Panc1 (cell line): ENCODE measurements at regions of chr12 and their contacts with region 1.

Region 1: DNA sequence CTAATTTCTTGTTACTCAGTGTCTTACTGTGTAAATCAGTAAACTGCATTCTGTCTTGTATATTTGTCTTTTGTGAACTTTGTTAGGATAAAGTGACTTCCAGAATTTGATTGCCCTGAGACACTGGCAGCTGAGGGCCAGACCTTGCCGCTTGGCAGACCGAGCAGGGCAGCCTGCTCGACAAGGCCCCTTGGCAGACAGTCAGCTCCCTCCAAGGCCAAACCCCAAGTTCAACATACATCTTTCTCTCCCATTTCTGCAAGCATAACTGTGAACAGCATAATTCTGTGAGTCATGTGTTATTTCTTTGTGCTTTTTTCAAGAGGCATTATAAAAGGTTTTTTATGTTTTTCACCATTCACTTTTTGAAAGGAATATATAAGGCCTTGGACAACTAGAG is 39.2 kb upstream of the BMAL2 start:
- DNase-seq: no peak
- ATAC-seq: no peak
- H3K4me3 ChIP-seq: no peak overlapping the region
- H3K27ac ChIP-seq: no peak overlapping the region
- H3K4me1 ChIP-seq: no peaks in the 10 kb centered on the region
- H3K27me3 ChIP-seq: no peaks in the 10 kb centered on the region
- CTCF ChIP-seq: no peak

Region 2: GRCh38 chr12:27161458-27162228 is 131.8 kb before region 1 on chr12:
- CTCF ChIA-PET with region 1: no interaction called
- POLR2A ChIA-PET with region 1: no interaction called
- in situ Hi-C with region 1: no loop called
- intact Hi-C with region 1: no loop called
- DNase-seq: peak; percentile 88
- ATAC-seq: peak; percentile 80
- H3K4me3 ChIP-seq: no peak overlapping the region
- H3K27ac ChIP-seq: no peak overlapping the region
- H3K4me1 ChIP-seq: no peaks in the 10 kb centered on the region
- H3K27me3 ChIP-seq: no peaks in the 10 kb centered on the region
- CTCF ChIP-seq: no peak

Region 3: GRCh38 chr12:27243804-27244683 is 49.4 kb before region 1 on chr12 and contains the start of gene STK38L:
- CTCF ChIA-PET with region 1: no interaction called
- POLR2A ChIA-PET with region 1: no interaction called
- in situ Hi-C with region 1: no loop called
- intact Hi-C with region 1: no loop called
- DNase-seq: peak; percentile 89
- ATAC-seq: peak; percentile 99
- H3K4me3 ChIP-seq: peak within 1 kb of the TSS; percentile 74 to 95
- H3K27ac ChIP-seq: peak within 1 kb of the TSS; percentile 94
- H3K4me1 ChIP-seq: peaks cover 15% of the 10 kb centered on the region
- H3K27me3 ChIP-seq: no peaks in the 10 kb centered on the region
- CTCF ChIP-seq: peak; percentile 35
- total RNA-seq, gene STK38L: 25.2 TPM

Region 4: DNA sequence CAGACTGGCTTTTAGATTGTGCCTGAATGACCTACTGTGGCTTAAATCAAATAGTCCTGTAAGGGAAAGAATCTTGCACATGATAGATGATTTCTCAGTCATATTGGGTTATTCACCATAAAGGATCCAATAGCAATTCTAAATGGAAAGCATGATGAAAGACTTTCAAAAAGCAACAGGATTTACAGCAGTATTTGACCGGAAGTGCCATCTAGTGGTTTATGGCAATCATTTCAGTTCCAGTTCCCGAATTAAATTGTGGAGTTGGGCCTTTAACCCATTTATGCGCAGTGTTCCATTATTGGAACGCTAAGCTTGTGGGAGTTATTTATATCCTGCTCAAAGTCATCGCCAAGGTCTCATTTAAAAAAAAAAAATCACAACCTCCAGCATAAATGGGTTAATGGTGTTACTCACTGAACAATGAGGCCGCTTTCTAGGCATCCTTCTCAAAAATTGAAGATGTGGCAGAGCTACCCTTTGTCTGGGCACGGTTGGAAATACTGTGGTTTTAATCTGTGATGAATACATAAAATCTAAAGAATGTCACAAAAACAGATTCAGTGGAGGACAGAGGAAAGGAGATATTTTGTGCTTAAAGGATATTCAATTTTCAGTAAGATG is 342.0 kb after region 1 on chr12:
- CTCF ChIA-PET with region 1: interaction called, 11 read pairs
- POLR2A ChIA-PET with region 1: no interaction called
- in situ Hi-C with region 1: no loop called
- intact Hi-C with region 1: no loop called
- DNase-seq: no peak
- ATAC-seq: peak; percentile 53
- H3K4me3 ChIP-seq: no peak overlapping the region
- H3K27ac ChIP-seq: peak overlapping the region; percentile 70; the same call in 1 of the 2 replicates
- H3K4me1 ChIP-seq: peaks cover 6% of the 10 kb centered on the region
- H3K27me3 ChIP-seq: no peaks in the 10 kb centered on the region
- CTCF ChIP-seq: peak; percentile 80